Caco-2 (cell line): ENCODE measurements at regions of chr7 and their contacts with region 1.

Region 1: DNA sequence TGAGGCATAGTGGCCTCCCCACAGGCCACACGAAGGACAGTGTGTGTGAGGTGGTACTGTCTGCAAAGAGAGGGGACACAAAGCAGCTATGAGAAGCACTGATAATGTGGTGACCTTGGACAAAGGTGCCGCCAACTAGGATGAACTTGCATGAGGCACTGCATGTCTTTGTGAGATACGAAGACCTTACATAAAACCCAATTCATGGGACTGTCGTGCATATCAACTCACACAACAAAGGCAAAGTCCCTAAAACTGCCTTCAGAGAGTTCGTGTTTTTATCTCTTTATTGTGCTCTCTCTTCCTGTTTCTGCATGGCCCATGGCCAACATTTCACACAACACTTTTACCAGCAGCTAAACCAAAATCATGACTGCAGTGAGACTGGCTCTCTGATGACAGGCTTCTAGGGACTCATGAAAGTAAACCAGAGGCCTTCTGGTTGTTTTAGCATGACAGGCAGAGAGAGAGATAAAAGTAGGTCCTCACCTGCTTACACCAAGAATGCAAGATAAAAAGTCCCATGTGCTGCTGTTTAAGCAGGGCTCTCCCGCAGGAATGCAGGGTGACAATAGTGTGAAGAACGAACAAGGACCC is 347.8 kb downstream of the ELMO1 start:
- DNase-seq: peak; percentile 53 to 66
- H3K4me3 ChIP-seq: no peak overlapping the region
- H3K4me3 Mint-ChIP-seq: peak overlapping the region; percentile 20
- H3K27ac Mint-ChIP-seq: peak overlapping the region; percentile 63
- H3K4me1 ChIP-seq: peaks cover 32% of the 10 kb centered on the region
- H3K4me1 Mint-ChIP-seq: peaks cover 17% of the 10 kb centered on the region
- H3K27me3 ChIP-seq: no peaks in the 10 kb centered on the region
- H3K27me3 Mint-ChIP-seq: no peaks in the 10 kb centered on the region
- CTCF ChIP-seq: no peak

Region 2: DNA sequence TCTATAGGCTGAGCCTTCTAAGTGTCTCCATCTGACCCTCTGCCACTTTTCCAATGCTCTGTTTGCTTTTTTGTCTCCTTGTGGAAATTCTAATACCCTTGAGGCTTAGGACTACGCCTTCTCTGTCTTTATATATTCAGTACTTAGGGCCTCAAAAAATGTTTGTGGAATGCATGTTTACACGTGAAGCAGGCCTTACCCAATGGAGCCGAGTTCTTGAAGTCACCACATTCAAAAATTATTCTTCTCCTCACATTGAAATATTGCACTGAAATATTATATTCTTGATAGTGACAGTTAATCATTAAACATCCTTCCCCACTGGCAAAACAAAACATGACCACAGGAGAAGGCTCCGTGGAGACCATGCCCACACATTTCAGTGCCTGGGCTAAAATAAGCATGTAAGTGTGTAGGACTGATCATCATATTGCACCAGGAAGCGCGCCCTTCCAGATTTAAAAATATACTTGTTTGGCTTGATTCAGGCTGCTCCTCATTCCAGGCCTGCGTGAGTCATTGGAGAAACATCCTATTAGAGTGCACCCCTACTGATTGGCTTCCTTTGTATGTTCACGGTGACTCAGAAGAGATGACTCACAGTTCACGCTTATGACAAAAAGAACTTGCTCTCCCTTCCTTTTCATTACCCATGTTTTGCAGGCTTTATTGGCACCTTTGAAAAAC is 69.1 kb before region 1 on chr7:
- CTCF ChIA-PET with region 1: no interaction called
- POLR2A ChIA-PET with region 1: no interaction called
- intact Hi-C with region 1: loop called (anchors 5 kb)
- DNase-seq: peak; percentile 83 to 86
- H3K4me3 ChIP-seq: no peak overlapping the region
- H3K4me3 Mint-ChIP-seq: peak overlapping the region; percentile 27
- H3K27ac Mint-ChIP-seq: peak overlapping the region; percentile 87
- H3K4me1 ChIP-seq: peaks cover 23% of the 10 kb centered on the region
- H3K4me1 Mint-ChIP-seq: peaks cover 24% of the 10 kb centered on the region
- H3K27me3 ChIP-seq: no peaks in the 10 kb centered on the region
- H3K27me3 Mint-ChIP-seq: no peaks in the 10 kb centered on the region
- CTCF ChIP-seq: no peak

Region 3: DNA sequence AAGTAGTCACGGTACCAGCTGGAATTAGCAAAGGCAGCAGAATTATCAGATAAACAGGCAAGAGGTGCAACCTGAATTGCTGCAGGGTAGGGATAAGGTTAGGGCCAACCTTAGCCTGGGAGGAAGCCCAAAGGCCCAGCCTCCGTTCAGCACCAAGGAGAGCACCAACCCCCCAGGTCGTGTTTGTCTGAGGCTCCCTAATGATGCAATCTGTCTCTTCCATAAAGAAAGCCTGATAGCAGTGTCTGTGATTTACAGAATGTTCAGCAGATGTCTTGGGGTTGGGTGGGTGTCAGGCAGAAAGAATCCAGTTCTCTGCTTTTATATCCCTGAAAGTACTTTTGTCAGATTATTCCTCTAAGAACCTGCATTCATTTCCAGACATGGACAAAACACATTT is 48.1 kb before region 1 on chr7:
- CTCF ChIA-PET with region 1: no interaction called
- POLR2A ChIA-PET with region 1: no interaction called
- intact Hi-C with region 1: loop called (anchors 5 kb)
- DNase-seq: peak; percentile 72 to 81
- H3K4me3 ChIP-seq: no peak overlapping the region
- H3K4me3 Mint-ChIP-seq: no peak overlapping the region
- H3K27ac Mint-ChIP-seq: no peak overlapping the region
- H3K4me1 ChIP-seq: peaks cover 7% of the 10 kb centered on the region; the same call in 1 of the 2 replicates
- H3K4me1 Mint-ChIP-seq: no peaks in the 10 kb centered on the region
- H3K27me3 ChIP-seq: no peaks in the 10 kb centered on the region
- H3K27me3 Mint-ChIP-seq: no peaks in the 10 kb centered on the region
- CTCF ChIP-seq: no peak